ENCODE measurements at regions of chr13 and their contacts with region 1.

Region 1: DNA sequence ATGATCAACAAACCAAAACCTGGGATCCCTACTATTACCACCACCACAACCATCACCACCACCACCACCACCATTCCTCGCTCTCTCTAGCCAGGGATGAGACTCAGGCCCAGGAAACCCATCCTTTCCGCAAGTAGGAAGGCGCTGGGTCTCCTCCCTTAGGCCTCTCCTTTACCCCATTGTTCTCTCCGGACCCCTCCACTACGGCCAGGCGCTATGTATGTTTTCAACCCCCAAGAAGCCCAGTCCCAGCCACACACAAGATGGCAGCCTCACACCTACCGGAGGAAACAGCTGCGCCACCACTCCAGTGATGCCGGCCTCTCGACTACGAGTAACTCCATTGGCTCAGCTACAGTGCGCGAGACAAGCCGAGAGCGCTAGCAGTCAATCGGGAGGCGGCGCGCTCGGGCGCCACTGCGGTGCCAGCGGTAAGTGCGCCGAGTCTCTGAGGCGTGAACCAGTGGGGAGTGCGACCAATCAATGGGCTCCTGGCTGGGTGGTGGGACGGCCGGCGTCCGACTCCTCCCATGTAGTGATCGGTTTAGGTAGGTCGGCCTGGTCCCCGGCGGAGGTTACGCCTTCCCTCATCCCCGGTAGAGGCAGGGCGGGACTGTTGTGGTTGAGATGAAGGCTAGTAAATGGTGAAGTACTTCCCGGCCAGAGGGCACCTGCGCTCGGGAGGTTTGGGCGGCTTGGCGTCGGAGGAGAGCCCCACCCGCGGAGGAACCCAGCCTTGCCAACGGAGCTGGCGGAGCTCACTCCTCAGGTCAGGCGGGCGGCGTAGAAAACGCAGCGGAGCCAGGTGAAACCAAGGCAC is at the starts of genes CAB39L and SETDB2:
- DNase-seq: peak; percentile 99
- H3K4me3 Mint-ChIP-seq: peak within 1 kb of the TSS; percentile 95
- H3K27ac Mint-ChIP-seq: peak within 1 kb of the TSS; percentile 99
- H3K4me1 Mint-ChIP-seq: peaks cover 66% of the 10 kb centered on the region
- H3K27me3 Mint-ChIP-seq: peaks cover 5% of the 10 kb centered on the region
- total RNA-seq, gene CAB39L: 7.0 and 7.1 TPM in 2 replicates
- total RNA-seq, gene SETDB2: 13.0 and 14.6 TPM in 2 replicates

Region 2: GRCh38 chr13:48975856-48976575 is 467.9 kb before region 1 on chr13 and contains the start of gene FNDC3A:
- intact Hi-C with region 1: loop called (anchors 1 kb)
- DNase-seq: peak; percentile 86
- H3K4me3 Mint-ChIP-seq: peak within 1 kb of the TSS; percentile 94
- H3K27ac Mint-ChIP-seq: peak within 1 kb of the TSS; percentile 100
- H3K4me1 Mint-ChIP-seq: peaks cover 43% of the 10 kb centered on the region
- H3K27me3 Mint-ChIP-seq: peaks cover 2% of the 10 kb centered on the region
- total RNA-seq, gene FNDC3A: 26.9 and 27.0 TPM in 2 replicates

Region 3: GRCh38 chr13:49300739-49301589 is 142.9 kb before region 1 on chr13:
- intact Hi-C with region 1: loop called (anchors 2 kb)
- DNase-seq: peak; percentile 61
- H3K4me3 Mint-ChIP-seq: peak overlapping the region; percentile 10
- H3K27ac Mint-ChIP-seq: peak overlapping the region; percentile 65
- H3K4me1 Mint-ChIP-seq: peaks cover 14% of the 10 kb centered on the region
- H3K27me3 Mint-ChIP-seq: no peaks in the 10 kb centered on the region

Region 4: DNA sequence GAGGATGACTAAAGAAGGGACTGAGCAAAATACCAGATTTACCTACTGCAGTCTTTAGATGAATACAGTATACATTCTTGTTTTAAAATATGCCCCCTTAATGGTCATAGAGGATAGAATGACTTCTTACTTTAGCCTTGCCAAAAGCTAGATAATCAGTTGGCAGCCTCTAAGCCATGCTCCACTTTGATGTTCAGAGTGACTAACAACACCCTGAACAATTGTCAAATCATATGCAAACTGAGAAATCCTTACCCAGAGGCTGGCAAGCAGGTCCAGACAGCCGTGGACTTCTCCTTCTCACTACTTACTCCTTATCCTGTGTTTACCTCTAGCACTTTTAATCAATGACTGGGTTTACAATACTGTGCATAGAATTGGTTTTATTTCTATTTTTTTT is 28.3 kb after region 1 on chr13:
- intact Hi-C with region 1: no loop called
- DNase-seq: no peak
- H3K4me3 Mint-ChIP-seq: no peak overlapping the region
- H3K27ac Mint-ChIP-seq: no peak overlapping the region
- H3K4me1 Mint-ChIP-seq: no peaks in the 10 kb centered on the region
- H3K27me3 Mint-ChIP-seq: no peaks in the 10 kb centered on the region

Region 5: DNA sequence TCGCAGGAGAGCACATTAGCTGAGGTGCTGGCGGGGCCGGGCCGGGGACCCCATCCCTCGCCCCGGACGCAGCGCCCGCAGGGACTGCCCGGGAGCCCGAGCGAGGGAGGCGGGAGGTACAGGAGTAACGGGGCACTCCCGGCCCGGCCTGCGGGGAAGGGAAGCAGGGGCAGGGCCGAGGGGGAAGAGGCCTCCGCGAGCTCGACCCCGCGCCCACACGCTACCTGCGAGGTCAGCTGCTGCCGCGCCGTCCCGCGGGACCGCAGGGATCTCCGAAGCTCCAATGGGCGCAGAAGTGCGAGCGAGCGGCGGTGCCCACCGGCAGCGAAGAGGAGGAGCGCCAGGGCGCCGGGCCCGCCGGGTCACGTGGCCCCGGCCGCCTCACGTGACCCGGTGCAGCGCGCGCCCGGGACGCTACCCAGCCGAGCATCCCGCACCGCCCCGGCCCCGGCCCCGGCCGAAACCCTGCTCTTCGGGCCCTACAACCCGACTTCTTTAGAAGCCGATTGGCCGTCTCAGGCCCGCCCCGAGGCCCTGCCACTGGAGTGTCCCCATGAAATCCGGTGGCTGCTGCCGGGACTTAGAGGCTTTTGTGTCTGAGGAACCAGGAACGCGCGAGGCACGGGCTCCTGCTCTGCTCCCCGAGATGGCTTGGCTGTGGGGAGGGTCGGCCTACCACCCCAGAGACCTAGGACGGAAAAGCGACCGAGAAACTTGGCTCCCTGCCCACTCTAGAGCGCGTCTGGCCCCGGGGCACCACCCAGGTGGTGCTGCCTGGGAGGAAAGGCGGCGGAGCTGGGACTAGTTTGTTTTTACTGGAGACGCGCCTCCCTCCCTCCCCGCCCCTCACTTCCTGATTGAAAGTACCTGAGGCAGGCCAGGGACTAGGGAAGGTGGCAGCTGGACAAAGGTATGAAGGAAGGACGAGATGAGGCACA is 141.6 kb after region 1 on chr13 and contains the start of gene RCBTB1:
- intact Hi-C with region 1: loop called (anchors 1 kb)
- DNase-seq: peak; percentile 60
- H3K4me3 Mint-ChIP-seq: peak within 1 kb of the TSS; percentile 90
- H3K27ac Mint-ChIP-seq: peak within 1 kb of the TSS; percentile 93
- H3K4me1 Mint-ChIP-seq: peaks cover 20% of the 10 kb centered on the region
- H3K27me3 Mint-ChIP-seq: peaks cover 2% of the 10 kb centered on the region
- total RNA-seq, gene RCBTB1: 14.9 and 16.3 TPM in 2 replicates

Region 6: DNA sequence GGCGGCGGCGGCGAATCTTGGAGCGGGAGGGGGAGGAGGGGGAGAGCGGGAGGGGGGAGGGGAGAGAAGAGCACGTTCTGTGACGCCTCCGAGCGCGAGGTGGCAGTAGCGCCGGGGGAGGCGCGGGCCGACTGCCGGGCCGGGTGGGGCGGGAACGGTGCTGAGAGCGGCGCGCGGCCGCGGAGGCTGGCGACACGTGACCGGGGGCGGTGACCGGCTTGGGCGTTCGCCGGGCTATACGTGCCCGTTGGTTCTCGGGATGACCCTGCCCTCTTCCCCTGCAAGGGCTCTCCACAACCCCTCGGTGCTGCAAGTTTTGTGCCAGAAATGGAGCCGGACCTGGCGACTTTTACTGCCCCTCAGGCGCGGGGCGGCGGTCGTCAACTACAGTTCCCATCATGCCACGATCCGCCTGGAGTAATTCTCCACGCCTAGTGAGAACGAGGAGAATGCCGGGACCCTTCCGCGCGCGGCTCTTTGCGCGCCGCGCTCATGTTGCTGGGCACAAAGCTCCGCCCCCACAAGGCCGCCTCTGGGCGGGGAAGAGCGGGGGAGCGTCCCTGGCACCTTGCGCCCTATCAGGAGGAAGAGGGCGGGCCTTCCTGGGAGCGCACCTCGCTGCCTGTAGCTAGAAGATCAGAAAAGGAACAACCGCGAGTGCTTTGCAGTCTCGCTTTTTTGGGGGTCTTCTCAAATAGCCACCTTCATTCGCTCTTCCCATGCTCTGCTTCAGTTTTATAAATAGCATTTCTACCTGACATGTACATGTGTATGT is 348.8 kb after region 1 on chr13 and contains the start of gene KPNA3:
- intact Hi-C with region 1: loop called (anchors 1 kb)
- DNase-seq: peak; percentile 93
- H3K4me3 Mint-ChIP-seq: peak within 1 kb of the TSS; percentile 96
- H3K27ac Mint-ChIP-seq: peak within 1 kb of the TSS; percentile 97
- H3K4me1 Mint-ChIP-seq: peaks cover 30% of the 10 kb centered on the region
- H3K27me3 Mint-ChIP-seq: peaks cover 6% of the 10 kb centered on the region
- total RNA-seq, gene KPNA3: 54.7 and 55.0 TPM in 2 replicates

Region 7: GRCh38 chr13:50236898-50237318 is 793.0 kb after region 1 on chr13:
- intact Hi-C with region 1: loop called (anchors 5 kb)
- DNase-seq: peak; percentile 45
- H3K4me3 Mint-ChIP-seq: peak overlapping the region; percentile 27
- H3K27ac Mint-ChIP-seq: peak overlapping the region; percentile 78
- H3K4me1 Mint-ChIP-seq: peaks cover 59% of the 10 kb centered on the region
- H3K27me3 Mint-ChIP-seq: peaks cover 22% of the 10 kb centered on the region